HEK293 (cell line): ENCODE measurements at regions of chr15 and their contacts with region 1.

Region 1: DNA sequence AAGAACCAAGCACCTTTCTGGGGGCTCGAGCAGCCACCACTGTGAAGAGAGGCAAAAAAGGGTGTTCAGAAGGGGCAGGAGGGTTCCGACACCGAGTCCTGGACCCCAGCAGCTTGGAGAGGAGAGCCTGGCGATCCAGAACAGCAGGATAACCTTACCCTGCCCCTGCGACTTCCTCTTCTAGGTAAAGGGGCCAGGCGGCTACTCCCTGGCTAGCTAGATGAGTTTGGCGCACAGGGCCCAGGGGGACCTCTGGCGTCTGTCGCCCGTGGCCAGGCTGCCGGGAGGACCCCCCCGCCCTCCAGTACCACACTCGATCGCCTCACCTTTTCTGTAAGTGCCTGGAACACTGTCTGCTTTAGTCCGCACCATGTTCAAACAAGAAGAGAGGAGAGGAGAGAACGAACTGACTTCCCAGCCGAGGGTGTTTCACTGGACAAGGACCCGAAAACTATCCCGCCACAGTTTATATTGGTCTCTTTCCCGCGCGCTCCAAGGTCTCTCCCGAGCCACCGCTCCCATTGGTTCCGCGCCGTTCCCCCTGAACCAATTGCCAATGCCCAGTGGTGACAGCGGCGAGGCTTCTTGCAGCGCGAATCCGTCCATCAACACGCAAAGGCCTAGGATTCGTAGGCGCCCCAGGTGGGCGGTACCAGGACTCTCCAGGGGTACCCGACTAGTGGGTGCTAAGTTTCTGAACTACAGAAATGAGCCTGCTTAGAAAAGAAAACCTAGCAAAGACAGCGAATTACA is at the start of gene PCLAF:
- H3K4me3 ChIP-seq: peak within 1 kb of the TSS; percentile 55
- H3K27ac ChIP-seq: peak within 1 kb of the TSS; percentile 84
- H3K4me1 ChIP-seq: no peaks in the 10 kb centered on the region
- CTCF ChIP-seq: no peak

Region 2: DNA sequence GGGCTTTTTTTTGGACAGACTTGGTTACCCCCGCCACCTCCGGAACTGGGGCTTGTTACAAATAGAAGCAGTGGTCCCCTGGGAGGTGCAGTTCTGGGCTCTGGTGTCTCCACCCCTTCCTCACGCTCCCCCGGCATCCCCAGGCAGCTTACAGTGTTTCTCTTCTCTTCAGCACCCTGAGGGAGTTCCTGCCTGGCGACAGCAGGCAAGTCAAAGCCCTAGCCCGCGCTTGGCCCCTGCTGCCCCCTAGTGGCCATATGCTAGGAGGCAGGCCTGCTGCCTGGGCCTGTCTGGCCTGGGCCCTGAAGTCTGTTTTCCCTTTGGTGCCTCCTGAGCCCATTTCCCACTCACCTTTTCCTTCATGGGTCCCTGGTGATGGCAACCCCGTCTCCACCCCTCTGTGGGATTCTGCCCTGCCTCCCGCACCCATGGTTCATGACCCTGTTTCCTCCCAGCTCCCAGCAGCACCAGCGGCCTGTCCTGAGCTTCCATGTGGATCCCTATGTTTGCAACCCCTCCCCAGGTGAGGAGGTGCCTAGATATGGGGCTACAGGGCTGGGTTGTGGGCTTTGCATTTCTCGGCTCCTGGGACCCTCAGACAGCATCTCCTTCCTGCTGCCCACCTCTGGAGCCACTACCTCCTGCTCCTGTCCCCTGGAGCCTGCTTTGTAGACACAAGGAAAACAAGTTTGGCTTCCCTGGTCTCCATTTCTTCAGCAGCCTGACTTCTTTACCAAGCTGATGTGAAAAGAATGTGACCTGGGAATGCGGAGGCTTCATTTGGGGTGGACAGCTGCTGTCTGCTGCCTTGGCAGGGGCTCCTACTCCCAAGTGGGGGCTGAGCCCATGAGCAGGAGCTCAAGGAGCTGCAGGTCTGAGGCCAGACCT is 227.5 kb before region 1 on chr15:
- CTCF ChIA-PET with region 1: no interaction called
- POLR2A ChIA-PET with region 1: interaction called, 10 read pairs
- H3K4me3 ChIP-seq: no peak overlapping the region
- H3K27ac ChIP-seq: peak overlapping the region; percentile 48
- H3K4me1 ChIP-seq: peaks cover 2% of the 10 kb centered on the region; the same call in 1 of the 2 replicates
- CTCF ChIP-seq: peak; percentile 92

Region 3: GRCh38 chr15:64361259-64361658 is 19.9 kb before region 1 on chr15:
- CTCF ChIA-PET with region 1: no interaction called
- POLR2A ChIA-PET with region 1: no interaction called
- H3K4me3 ChIP-seq: no peak overlapping the region
- H3K27ac ChIP-seq: no peak overlapping the region
- H3K4me1 ChIP-seq: 0 out of 2 replicates have a peak, but pooled peaks cover 2% of the 10 kb centered on the region
- CTCF ChIP-seq: no peak

Region 4: GRCh38 chr15:64412216-64412615 is 31.0 kb after region 1 on chr15:
- CTCF ChIA-PET with region 1: no interaction called
- POLR2A ChIA-PET with region 1: interaction called, 13 read pairs
- H3K4me3 ChIP-seq: no peak overlapping the region
- H3K27ac ChIP-seq: no peak overlapping the region
- H3K4me1 ChIP-seq: no peaks in the 10 kb centered on the region
- CTCF ChIP-seq: no peak